Mucosa of descending colon (tissue), 3 donors: ENCODE measurements at regions of chr21 and their contacts with region 1.

Region 1: GRCh38 chr21:45140346-45140940 is 66.1 kb downstream of the ADARB1 start:
- DNase-seq: peak in 2 of 3 donors; percentile 77 to 81
- ATAC-seq: peak; percentile 83
- H3K4me3 ChIP-seq: no peak overlapping the region
- H3K4me1 ChIP-seq: no peaks in the 10 kb centered on the region
- CTCF ChIP-seq: peak; percentile 55

Region 2: GRCh38 chr21:44982558-44983244 is 157.7 kb before region 1 on chr21:
- intact Hi-C with region 1: no loop called
- DNase-seq: peak in 1 of 3 donors; percentile 40
- ATAC-seq: no peak
- H3K4me3 ChIP-seq: no peak overlapping the region
- H3K4me1 ChIP-seq: no peaks in the 10 kb centered on the region
- CTCF ChIP-seq: no peak

Region 3: DNA sequence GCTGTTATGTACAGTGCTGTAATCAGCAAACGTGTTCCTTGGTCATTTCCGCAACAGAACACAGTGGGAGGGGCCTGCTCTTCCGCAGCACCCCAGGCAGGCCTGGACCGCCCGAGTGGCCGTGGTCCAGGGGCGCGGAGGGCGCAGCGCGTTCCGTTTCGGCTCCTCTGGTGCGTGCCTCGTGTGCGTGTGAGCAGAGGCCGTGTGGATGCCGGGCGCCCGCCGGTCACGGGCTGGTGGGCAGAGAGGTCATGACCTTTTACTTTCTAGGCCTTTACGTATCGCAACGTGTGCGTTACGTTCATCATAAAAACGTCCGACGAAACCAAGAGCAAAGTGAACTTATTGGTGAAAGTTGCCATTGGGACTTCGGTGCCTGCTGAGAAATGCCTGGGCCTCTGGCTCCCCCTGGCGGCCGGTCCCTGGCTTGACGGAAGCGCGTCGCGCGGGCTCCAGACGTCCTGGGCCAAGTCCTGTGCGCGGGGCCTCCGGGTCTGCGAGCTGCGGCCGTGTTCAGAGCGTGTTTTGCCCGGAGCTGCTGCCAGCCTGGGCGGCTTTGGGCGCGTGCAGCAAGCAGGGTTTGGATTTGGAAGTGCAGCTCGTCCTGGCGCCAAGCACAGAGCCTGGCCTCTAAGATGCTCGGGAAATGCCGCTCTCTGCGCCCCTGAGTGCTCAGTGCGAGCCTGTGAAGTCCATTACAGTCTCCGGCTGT is 298.9 kb after region 1 on chr21:
- intact Hi-C with region 1: loop called (anchors 5 to 10 kb)
- DNase-seq: peak; percentile 82 to 92 (median 88)
- ATAC-seq: peak; percentile 93
- H3K4me3 ChIP-seq: no peak overlapping the region
- H3K4me1 ChIP-seq: peaks cover 9% of the 10 kb centered on the region
- CTCF ChIP-seq: peak; percentile 91